Transverse colon (tissue), 4 donors: ENCODE measurements at regions of chr6 and their contacts with region 1.

Region 1: GRCh38 chr6:56505512-56506260 is 137.0 kb downstream of the DST start:
- DNase-seq: no peak
- H3K4me3 ChIP-seq: no peak overlapping the region
- H3K27ac ChIP-seq: peak overlapping the region; percentile 29 to 74 (median 58)
- H3K4me1 ChIP-seq: peaks cover 0 to 17% (median 9%) of the 10 kb centered on the region in 4 donors
- H3K27me3 ChIP-seq: no peaks in the 10 kb centered on the region
- CTCF ChIP-seq: no peak
- EP300 ChIP-seq: no peak
- POLR2A ChIP-seq: no peak

Region 2: GRCh38 chr6:56381840-56382251 is 123.8 kb before region 1 on chr6:
- in situ Hi-C with region 1: no loop called
- intact Hi-C with region 1: no loop called
- DNase-seq: no peak
- H3K4me3 ChIP-seq: no peak overlapping the region
- H3K27ac ChIP-seq: no peak overlapping the region
- H3K4me1 ChIP-seq: peaks cover 0 to 3% (median 0%) of the 10 kb centered on the region in 4 donors
- H3K27me3 ChIP-seq: no peaks in the 10 kb centered on the region
- CTCF ChIP-seq: no peak
- EP300 ChIP-seq: no peak
- POLR2A ChIP-seq: no peak

Region 3: DNA sequence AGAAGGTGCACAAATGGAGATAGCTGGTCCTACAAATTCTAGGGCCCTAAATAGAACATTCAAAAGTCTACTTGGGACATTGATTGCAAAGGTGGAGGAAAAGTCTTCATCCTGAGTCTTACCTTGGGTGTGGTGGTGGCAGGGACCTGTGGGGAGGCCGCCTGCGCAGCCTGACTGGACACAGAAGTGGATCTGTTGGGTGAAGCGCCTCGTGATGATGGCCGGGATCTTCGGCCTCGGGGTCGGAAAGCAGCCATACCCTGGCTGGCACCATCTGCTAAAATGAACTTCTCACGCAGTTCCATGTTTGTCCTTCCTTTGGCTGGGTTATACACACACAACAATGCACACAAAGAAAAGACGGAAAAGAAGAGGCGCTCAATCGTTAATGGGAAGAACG is 42.2 kb before region 1 on chr6:
- in situ Hi-C with region 1: no loop called
- intact Hi-C with region 1: loop called (anchors 2 kb)
- DNase-seq: no peak
- H3K4me3 ChIP-seq: no peak overlapping the region
- H3K27ac ChIP-seq: no peak overlapping the region
- H3K4me1 ChIP-seq: no peaks in the 10 kb centered on the region
- H3K27me3 ChIP-seq: no peaks in the 10 kb centered on the region
- CTCF ChIP-seq: no peak
- EP300 ChIP-seq: no peak
- POLR2A ChIP-seq: no peak

Region 4: GRCh38 chr6:56581296-56581925 is 75.7 kb after region 1 on chr6:
- in situ Hi-C with region 1: no loop called
- intact Hi-C with region 1: no loop called
- DNase-seq: no peak
- H3K4me3 ChIP-seq: no peak overlapping the region
- H3K27ac ChIP-seq: no peak overlapping the region
- H3K4me1 ChIP-seq: no peaks in the 10 kb centered on the region
- H3K27me3 ChIP-seq: no peaks in the 10 kb centered on the region
- CTCF ChIP-seq: no peak
- EP300 ChIP-seq: no peak
- POLR2A ChIP-seq: no peak

Region 5: GRCh38 chr6:56730663-56731529 is 225.2 kb after region 1 on chr6:
- in situ Hi-C with region 1: no loop called
- intact Hi-C with region 1: no loop called
- DNase-seq: no peak
- H3K4me3 ChIP-seq: no peak overlapping the region
- H3K27ac ChIP-seq: peak overlapping the region; percentile 5 to 57 (median 22)
- H3K4me1 ChIP-seq: peaks cover 19 to 86% (median 33%) of the 10 kb centered on the region in 4 donors
- H3K27me3 ChIP-seq: no peaks in the 10 kb centered on the region
- CTCF ChIP-seq: no peak
- EP300 ChIP-seq: no peak
- POLR2A ChIP-seq: no peak